Psoas muscle (tissue), 8 donors: ENCODE measurements at regions of chr5 and their contacts with region 1.

Region 1: GRCh38 chr5:89282554-89283510 is 399.8 kb upstream of the MEF2C start:
- DNase-seq: no peak
- ATAC-seq: peak; percentile 85 to 93 (median 91)
- H3K4me3 ChIP-seq: no peak overlapping the region
- H3K27ac ChIP-seq: peak overlapping the region; percentile 69
- H3K4me1 ChIP-seq: peaks cover 37% of the 10 kb centered on the region
- H3K27me3 ChIP-seq: no peaks in the 10 kb centered on the region
- CTCF ChIP-seq: no peak

Region 2: GRCh38 chr5:89191374-89191773 is 91.5 kb before region 1 on chr5:
- intact Hi-C with region 1: loop called in 1 of 2 experiments (anchors 10 kb)
- DNase-seq: no peak
- ATAC-seq: peak; percentile 86 to 96 (median 94)
- H3K4me3 ChIP-seq: no peak overlapping the region
- H3K27ac ChIP-seq: peak overlapping the region; percentile 70
- H3K4me1 ChIP-seq: peaks cover 34% of the 10 kb centered on the region
- H3K27me3 ChIP-seq: no peaks in the 10 kb centered on the region
- CTCF ChIP-seq: no peak

Region 3: DNA sequence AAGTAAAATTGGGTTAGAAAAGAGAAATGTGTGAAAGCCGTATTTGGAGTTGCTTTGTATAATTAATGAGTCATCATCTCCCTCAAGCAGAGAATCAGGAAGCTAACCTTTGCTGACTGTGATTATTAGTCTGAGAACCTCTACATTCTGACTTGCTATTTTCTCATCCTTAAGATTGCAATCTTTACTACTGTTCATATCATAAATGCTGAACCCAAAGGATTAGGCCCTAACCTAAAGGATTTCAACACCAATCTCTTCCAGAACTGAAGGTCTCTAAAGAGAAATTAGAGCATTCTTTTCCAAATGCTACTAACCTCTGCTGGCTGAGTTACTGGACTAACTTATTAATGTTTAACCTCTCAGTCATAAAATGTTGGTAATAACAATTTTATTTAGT is 138.2 kb after region 1 on chr5:
- intact Hi-C with region 1: loop called in 1 of 2 experiments (anchors 10 kb)
- DNase-seq: no peak
- ATAC-seq: no peak
- H3K4me3 ChIP-seq: no peak overlapping the region
- H3K27ac ChIP-seq: no peak overlapping the region
- H3K4me1 ChIP-seq: no peaks in the 10 kb centered on the region
- H3K27me3 ChIP-seq: no peaks in the 10 kb centered on the region
- CTCF ChIP-seq: no peak

Region 4: GRCh38 chr5:89851911-89852310 is 569.1 kb after region 1 on chr5:
- intact Hi-C with region 1: no loop called
- DNase-seq: no peak
- ATAC-seq: no peak
- H3K4me3 ChIP-seq: no peak overlapping the region
- H3K27ac ChIP-seq: no peak overlapping the region
- H3K4me1 ChIP-seq: peaks cover 10% of the 10 kb centered on the region
- H3K27me3 ChIP-seq: no peaks in the 10 kb centered on the region
- CTCF ChIP-seq: no peak